Caco-2 (cell line): ENCODE measurements at regions of chr2 and their contacts with region 1.

Region 1: GRCh38 chr2:164464376-164464775 is 156.9 kb downstream of the GRB14 start:
- DNase-seq: no peak
- H3K4me3 ChIP-seq: no peak overlapping the region
- H3K4me3 Mint-ChIP-seq: no peak overlapping the region
- H3K27ac Mint-ChIP-seq: no peak overlapping the region
- H3K4me1 ChIP-seq: no peaks in the 10 kb centered on the region
- H3K4me1 Mint-ChIP-seq: no peaks in the 10 kb centered on the region
- H3K27me3 ChIP-seq: no peaks in the 10 kb centered on the region; the same call in 1 of the 2 replicates
- H3K27me3 Mint-ChIP-seq: peaks cover 24% of the 10 kb centered on the region
- CTCF ChIP-seq: no peak

Region 2: GRCh38 chr2:163733301-163733938 is 731.0 kb before region 1 on chr2:
- CTCF ChIA-PET with region 1: interaction called, 13 read pairs
- POLR2A ChIA-PET with region 1: no interaction called
- intact Hi-C with region 1: no loop called
- DNase-seq: no peak
- H3K4me3 ChIP-seq: no peak overlapping the region
- H3K4me3 Mint-ChIP-seq: no peak overlapping the region
- H3K27ac Mint-ChIP-seq: no peak overlapping the region
- H3K4me1 ChIP-seq: no peaks in the 10 kb centered on the region
- H3K4me1 Mint-ChIP-seq: no peaks in the 10 kb centered on the region
- H3K27me3 ChIP-seq: no peaks in the 10 kb centered on the region
- H3K27me3 Mint-ChIP-seq: no peaks in the 10 kb centered on the region
- CTCF ChIP-seq: no peak

Region 3: GRCh38 chr2:163943403-163944346 is 520.7 kb before region 1 on chr2:
- CTCF ChIA-PET with region 1: no interaction called
- POLR2A ChIA-PET with region 1: no interaction called
- intact Hi-C with region 1: no loop called
- DNase-seq: no peak
- H3K4me3 ChIP-seq: no peak overlapping the region
- H3K4me3 Mint-ChIP-seq: no peak overlapping the region
- H3K27ac Mint-ChIP-seq: no peak overlapping the region
- H3K4me1 ChIP-seq: peaks cover 7% of the 10 kb centered on the region; the same call in 1 of the 2 replicates
- H3K4me1 Mint-ChIP-seq: peaks cover 12% of the 10 kb centered on the region
- H3K27me3 ChIP-seq: no peaks in the 10 kb centered on the region
- H3K27me3 Mint-ChIP-seq: no peaks in the 10 kb centered on the region
- CTCF ChIP-seq: no peak

Region 4: DNA sequence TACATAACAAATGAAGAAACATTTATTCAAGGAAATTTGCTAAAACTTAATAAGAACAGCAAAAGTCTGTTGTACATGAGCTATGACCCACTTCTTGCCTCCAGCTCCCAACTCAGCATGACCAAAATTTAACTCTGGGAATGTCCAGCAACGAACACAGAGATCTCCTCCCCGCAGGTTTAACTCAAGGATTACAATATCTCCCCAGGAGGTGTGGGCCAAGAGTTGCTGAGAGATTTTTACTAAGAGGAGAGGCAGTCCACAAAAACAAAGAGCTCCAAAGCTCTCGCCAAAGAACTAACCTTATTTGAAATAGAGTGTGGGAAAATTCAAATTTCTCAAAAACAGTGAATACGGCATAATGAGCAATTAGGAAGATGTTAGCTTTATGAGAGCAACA is 161.6 kb before region 1 on chr2:
- CTCF ChIA-PET with region 1: no interaction called
- POLR2A ChIA-PET with region 1: no interaction called
- intact Hi-C with region 1: no loop called
- DNase-seq: no peak
- H3K4me3 ChIP-seq: no peak overlapping the region
- H3K4me3 Mint-ChIP-seq: no peak overlapping the region
- H3K27ac Mint-ChIP-seq: no peak overlapping the region
- H3K4me1 ChIP-seq: no peaks in the 10 kb centered on the region
- H3K4me1 Mint-ChIP-seq: no peaks in the 10 kb centered on the region
- H3K27me3 ChIP-seq: no peaks in the 10 kb centered on the region
- H3K27me3 Mint-ChIP-seq: peaks cover 3% of the 10 kb centered on the region
- CTCF ChIP-seq: no peak

Region 5: DNA sequence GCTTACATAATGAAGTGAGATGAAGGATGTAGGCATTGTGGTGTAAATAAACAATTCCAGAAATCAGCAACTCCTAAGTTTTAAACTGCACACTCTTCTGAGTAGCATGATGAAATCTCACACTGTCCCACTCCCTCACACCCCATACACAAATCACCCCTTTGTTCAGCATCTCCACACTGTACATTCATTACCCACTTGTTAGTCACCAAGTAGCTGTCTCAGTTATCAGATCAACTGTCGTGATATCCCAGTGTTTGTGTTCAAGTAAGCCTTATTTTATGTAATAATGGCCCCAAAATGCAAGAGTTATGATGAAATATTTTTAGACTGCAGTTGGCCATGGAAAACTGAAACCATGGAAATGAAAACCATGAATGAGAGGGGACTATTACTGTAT is 21.2 kb after region 1 on chr2:
- CTCF ChIA-PET with region 1: no interaction called
- POLR2A ChIA-PET with region 1: no interaction called
- intact Hi-C with region 1: no loop called
- DNase-seq: no peak
- H3K4me3 ChIP-seq: no peak overlapping the region
- H3K4me3 Mint-ChIP-seq: no peak overlapping the region
- H3K27ac Mint-ChIP-seq: no peak overlapping the region
- H3K4me1 ChIP-seq: no peaks in the 10 kb centered on the region
- H3K4me1 Mint-ChIP-seq: no peaks in the 10 kb centered on the region
- H3K27me3 ChIP-seq: no peaks in the 10 kb centered on the region
- H3K27me3 Mint-ChIP-seq: no peaks in the 10 kb centered on the region
- CTCF ChIP-seq: no peak